CD4-positive, alpha-beta memory T cell (primary cell): ENCODE measurements at regions of chr10 and their contacts with region 1.

Region 1: DNA sequence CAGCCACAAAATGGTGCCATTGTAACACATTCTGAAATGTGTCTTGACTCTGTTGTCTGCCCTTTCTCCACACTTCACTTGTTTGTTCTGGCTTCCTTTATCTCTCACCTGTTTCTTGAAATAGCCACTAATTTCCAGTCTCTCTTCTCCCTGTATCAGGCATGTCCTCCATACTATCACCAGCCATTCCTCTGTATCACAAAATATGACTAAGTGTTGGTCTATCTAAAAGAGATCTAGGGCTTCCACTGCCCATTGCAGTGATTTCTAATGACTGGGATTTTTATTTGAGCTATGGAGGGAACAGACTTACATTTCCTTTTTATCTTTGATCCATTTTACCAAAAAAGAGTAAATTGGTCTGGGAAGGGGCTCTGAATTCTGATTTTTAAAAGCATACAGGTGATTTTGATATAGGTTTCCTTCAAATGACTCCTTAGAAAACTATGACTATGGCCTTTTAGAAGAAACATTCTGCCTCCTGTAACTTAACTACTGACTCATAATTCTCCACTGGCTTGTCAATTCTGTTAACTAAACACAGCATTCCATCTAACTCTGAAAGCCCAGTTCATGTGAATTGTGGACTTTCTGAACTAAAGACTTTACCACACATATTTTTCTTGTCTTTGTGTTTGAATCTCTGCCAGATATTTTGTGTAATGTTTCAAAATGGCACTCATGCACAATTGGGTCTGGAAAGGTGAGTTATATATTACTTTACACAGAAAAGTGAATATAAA is 1121.4 kb downstream of the XPNPEP1 start:
- DNase-seq: no peak
- H3K4me3 ChIP-seq: no peak overlapping the region
- H3K4me3 Mint-ChIP-seq: no peak overlapping the region
- H3K27ac ChIP-seq: no peak overlapping the region
- H3K27ac Mint-ChIP-seq: no peak overlapping the region
- H3K4me1 ChIP-seq: no peaks in the 10 kb centered on the region
- H3K4me1 Mint-ChIP-seq: no peaks in the 10 kb centered on the region
- H3K27me3 ChIP-seq: no peaks in the 10 kb centered on the region
- H3K27me3 Mint-ChIP-seq: no peaks in the 10 kb centered on the region

Region 2: DNA sequence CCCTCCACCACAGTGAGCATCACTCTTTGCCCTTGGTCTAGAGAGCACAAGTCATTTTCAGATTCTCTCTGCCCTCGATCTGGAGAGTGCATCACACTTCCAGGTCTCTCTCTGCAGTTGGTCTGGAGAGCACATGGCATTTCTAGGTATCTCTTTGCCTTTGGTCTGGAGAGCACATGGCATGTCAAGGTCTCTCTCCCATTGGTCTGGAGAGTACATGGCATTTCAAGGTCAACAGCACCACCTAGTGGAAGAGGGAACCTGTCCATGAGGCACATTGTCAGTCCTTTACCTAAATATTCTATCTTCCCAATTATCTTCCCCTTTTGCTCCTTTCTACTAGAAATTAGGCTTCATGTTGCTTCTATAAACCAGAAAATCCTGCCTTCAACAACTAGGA is 18.0 kb before region 1 on chr10:
- CTCF ChIA-PET with region 1: no interaction called
- POLR2A ChIA-PET with region 1: no interaction called
- intact Hi-C with region 1: loop called (anchors 1 kb)
- DNase-seq: no peak
- H3K4me3 ChIP-seq: no peak overlapping the region
- H3K4me3 Mint-ChIP-seq: no peak overlapping the region
- H3K27ac ChIP-seq: no peak overlapping the region
- H3K27ac Mint-ChIP-seq: no peak overlapping the region
- H3K4me1 ChIP-seq: no peaks in the 10 kb centered on the region
- H3K4me1 Mint-ChIP-seq: no peaks in the 10 kb centered on the region
- H3K27me3 ChIP-seq: no peaks in the 10 kb centered on the region
- H3K27me3 Mint-ChIP-seq: no peaks in the 10 kb centered on the region